ENCODE measurements at regions of chr9 and their contacts with region 1.

Region 1: GRCh38 chr9:109953813-109954497 is 174.0 kb downstream of the PALM2AKAP2 start:
- DNase-seq: no peak
- ATAC-seq: peak; percentile 75
- H3K4me3 Mint-ChIP-seq: no peak overlapping the region
- H3K27ac Mint-ChIP-seq: peak overlapping the region; percentile 63
- H3K4me1 Mint-ChIP-seq: peaks cover 61% of the 10 kb centered on the region
- H3K27me3 Mint-ChIP-seq: no peaks in the 10 kb centered on the region
- CTCF ChIP-seq: no peak

Region 2: DNA sequence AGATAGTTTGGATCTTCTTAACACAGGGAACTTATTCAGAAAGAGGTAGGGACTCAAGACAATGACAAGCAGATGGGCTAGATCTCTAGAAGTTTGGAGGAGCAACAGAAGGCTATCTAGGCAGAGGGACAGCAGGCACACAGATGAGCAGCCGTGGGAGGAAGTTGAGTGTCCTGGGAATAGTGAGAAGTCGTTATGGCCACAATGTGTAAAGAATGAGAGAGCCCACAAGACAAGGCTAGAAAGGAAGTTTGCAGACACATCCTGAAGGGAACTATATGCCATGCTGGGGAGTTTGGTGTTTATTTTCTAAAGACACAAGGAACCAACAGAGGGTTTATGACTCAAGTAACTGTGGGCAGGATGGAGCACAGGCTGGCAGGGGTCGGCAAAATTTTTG is 13.4 kb before region 1 on chr9:
- CTCF ChIA-PET with region 1: no interaction called
- POLR2A ChIA-PET with region 1: interaction called, 6 read pairs
- intact Hi-C with region 1: loop called (anchors 1 kb)
- DNase-seq: no peak
- ATAC-seq: no peak
- H3K4me3 Mint-ChIP-seq: no peak overlapping the region
- H3K27ac Mint-ChIP-seq: no peak overlapping the region
- H3K4me1 Mint-ChIP-seq: peaks cover 20% of the 10 kb centered on the region
- H3K27me3 Mint-ChIP-seq: no peaks in the 10 kb centered on the region
- CTCF ChIP-seq: no peak

Region 3: GRCh38 chr9:110021891-110022290 is 67.9 kb after region 1 on chr9:
- CTCF ChIA-PET with region 1: no interaction called
- POLR2A ChIA-PET with region 1: no interaction called
- intact Hi-C with region 1: no loop called
- DNase-seq: no peak
- ATAC-seq: peak; percentile 95
- H3K4me3 Mint-ChIP-seq: peak overlapping the region; percentile 51
- H3K27ac Mint-ChIP-seq: peak overlapping the region; percentile 87
- H3K4me1 Mint-ChIP-seq: peaks cover 20% of the 10 kb centered on the region
- H3K27me3 Mint-ChIP-seq: no peaks in the 10 kb centered on the region
- CTCF ChIP-seq: no peak

Measured in activated B cell treated with CpG ODN at 0.5 μM for 24 hours (primary cell).